ENCODE measurements at regions of chr7 and their contacts with region 1.

Region 1: GRCh38 chr7:26500749-26501352 is 209.2 kb downstream of the SNX10 start:
- DNase-seq: no peak
- ATAC-seq: no peak
- H3K4me3 ChIP-seq: no peak overlapping the region
- H3K27ac ChIP-seq: no peak overlapping the region
- H3K4me1 ChIP-seq: no peaks in the 10 kb centered on the region
- H3K27me3 ChIP-seq: peaks cover 0 to 22% (median 7%) of the 10 kb centered on the region in 7 donors
- CTCF ChIP-seq: peak in 7 of 9 donors; percentile 14 to 54 (median 30)

Region 2: DNA sequence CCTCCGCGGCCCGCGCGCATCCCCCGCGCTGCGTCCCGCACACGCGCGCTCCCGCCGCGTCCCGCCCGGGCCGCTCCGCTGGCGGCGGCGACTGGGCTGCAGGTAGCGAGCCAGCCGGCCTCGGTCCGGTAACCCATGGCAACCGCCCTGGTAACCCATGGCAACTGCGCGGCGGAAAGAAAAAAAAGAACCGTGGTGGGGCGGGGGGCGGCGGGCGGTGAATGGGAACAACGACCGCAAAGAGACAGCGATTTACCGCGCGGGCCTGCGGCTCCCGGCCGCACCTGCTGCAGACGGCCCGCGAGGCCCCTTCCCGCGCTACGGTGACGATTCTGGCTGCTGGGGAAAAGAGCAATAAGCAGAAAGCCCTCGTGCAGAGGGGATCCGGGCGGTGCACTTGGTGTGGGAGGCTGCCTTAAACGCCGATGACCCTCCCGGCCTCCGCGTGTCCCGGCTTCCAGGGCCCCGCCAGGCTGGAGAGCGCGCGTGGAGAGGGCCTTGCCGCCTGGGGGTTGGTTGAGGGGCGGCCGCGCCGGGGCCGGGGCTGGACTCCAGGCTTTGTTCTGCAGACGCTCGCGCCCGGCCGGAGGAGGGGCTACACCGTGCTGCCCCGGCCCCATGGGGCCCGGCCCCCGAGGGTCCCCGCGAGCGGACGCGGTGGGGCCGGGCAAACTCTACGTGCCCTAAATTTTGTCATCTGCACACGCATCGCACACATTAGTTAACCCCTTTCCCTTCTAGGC is 124.5 kb before region 1 on chr7:
- intact Hi-C with region 1: loop called in 4 of 10 experiments (anchors 2 to 10 kb)
- DNase-seq: peak in 1 of 2 donors; percentile 21
- ATAC-seq: peak; percentile 33 to 73 (median 40)
- H3K4me3 ChIP-seq: peak overlapping the region; percentile 9 to 52 (median 38)
- H3K27ac ChIP-seq: no peak overlapping the region
- H3K4me1 ChIP-seq: peaks cover 2 to 14% (median 6%) of the 10 kb centered on the region in 9 donors
- H3K27me3 ChIP-seq: peaks cover 29 to 98% (median 95%) of the 10 kb centered on the region in 7 donors
- CTCF ChIP-seq: no peak

Region 3: GRCh38 chr7:26388256-26388655 is 112.6 kb before region 1 on chr7:
- intact Hi-C with region 1: loop called in 1 of 10 experiments (anchors 10 kb)
- DNase-seq: no peak
- ATAC-seq: no peak
- H3K4me3 ChIP-seq: no peak overlapping the region
- H3K27ac ChIP-seq: no peak overlapping the region
- H3K4me1 ChIP-seq: no peaks in the 10 kb centered on the region
- H3K27me3 ChIP-seq: peaks cover 0 to 94% (median 80%) of the 10 kb centered on the region in 7 donors
- CTCF ChIP-seq: no peak